Left ventricle myocardium inferior (tissue), 1 donor: ENCODE measurements at regions of chr2 and their contacts with region 1.

Region 1: GRCh38 chr2:58054264-58054663 is 7.7 kb downstream of the VRK2 start:
- DNase-seq: no peak
- H3K4me3 ChIP-seq: no peak overlapping the region
- H3K27ac ChIP-seq: no peak overlapping the region
- H3K4me1 ChIP-seq: peaks cover 54% of the 10 kb centered on the region
- H3K27me3 ChIP-seq: no peaks in the 10 kb centered on the region
- CTCF ChIP-seq: no peak

Region 2: DNA sequence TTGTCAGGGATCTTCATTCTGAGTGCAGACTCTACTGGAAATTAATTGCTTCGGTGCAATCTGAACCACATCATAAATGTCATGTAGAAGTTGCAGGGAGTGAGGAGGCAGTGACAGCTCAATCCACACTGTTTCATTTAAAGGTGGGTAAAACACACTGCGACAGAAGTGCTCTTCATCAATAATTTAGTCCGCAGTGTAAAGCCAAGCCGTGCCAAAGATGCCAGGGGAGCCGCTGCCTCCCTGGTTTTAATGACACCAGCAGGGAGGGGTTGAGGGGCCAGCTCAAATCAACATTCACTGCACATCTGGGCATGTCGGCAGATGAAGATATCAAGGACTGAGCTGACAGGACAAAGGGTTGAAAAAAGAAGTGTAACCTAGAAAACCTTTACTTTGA is 313.4 kb before region 1 on chr2:
- intact Hi-C with region 1: no loop called
- DNase-seq: no peak
- H3K4me3 ChIP-seq: no peak overlapping the region
- H3K27ac ChIP-seq: no peak overlapping the region
- H3K4me1 ChIP-seq: no peaks in the 10 kb centered on the region
- H3K27me3 ChIP-seq: no peaks in the 10 kb centered on the region
- CTCF ChIP-seq: no peak

Region 3: GRCh38 chr2:58237741-58238140 is 183.5 kb after region 1 on chr2:
- intact Hi-C with region 1: loop called (anchors 10 kb)
- DNase-seq: no peak
- H3K4me3 ChIP-seq: no peak overlapping the region
- H3K27ac ChIP-seq: no peak overlapping the region
- H3K4me1 ChIP-seq: peaks cover 28% of the 10 kb centered on the region
- H3K27me3 ChIP-seq: no peaks in the 10 kb centered on the region
- CTCF ChIP-seq: no peak

Region 4: GRCh38 chr2:58514252-58514651 is 460.0 kb after region 1 on chr2:
- intact Hi-C with region 1: no loop called
- DNase-seq: no peak
- H3K4me3 ChIP-seq: no peak overlapping the region
- H3K27ac ChIP-seq: no peak overlapping the region
- H3K4me1 ChIP-seq: no peaks in the 10 kb centered on the region
- H3K27me3 ChIP-seq: peaks cover 7% of the 10 kb centered on the region
- CTCF ChIP-seq: no peak